ENCODE measurements at regions of chr10 and their contacts with region 1.

Region 1: GRCh38 chr10:58384999-58385783 is at the start of gene TFAM:
- DNase-seq: peak; percentile 88
- ATAC-seq: peak; percentile 97
- H3K4me3 ChIP-seq: peak within 1 kb of the TSS; percentile 78 to 96 (median 90)
- H3K27ac ChIP-seq: peak within 1 kb of the TSS; percentile 82
- H3K4me1 ChIP-seq: peaks cover 38% of the 10 kb centered on the region
- H3K27me3 ChIP-seq: no peaks in the 10 kb centered on the region; a peak in 1 of 5 replicates
- CTCF ChIP-seq: peak; percentile 91
- EP300 ChIP-seq: peak in 1 of 2 experiments; percentile 43; a peak in 1 of 4 replicates
- POLR2A ChIP-seq: peak; percentile 97
- RAD21 ChIP-seq: peak; percentile 91
- total RNA-seq, gene TFAM: 125 and 189 TPM in 2 replicates

Region 2: GRCh38 chr10:58177362-58177947 is 207.7 kb before region 1 on chr10:
- CTCF ChIA-PET with region 1: interaction called, 4 read pairs
- POLR2A ChIA-PET with region 1: no interaction called
- in situ Hi-C with region 1: loop called (anchors 10 kb)
- intact Hi-C with region 1: loop called (anchors 5 kb)
- DNase-seq: peak; percentile 15
- ATAC-seq: no peak
- H3K4me3 ChIP-seq: no peak overlapping the region
- H3K27ac ChIP-seq: no peak overlapping the region
- H3K4me1 ChIP-seq: no peaks in the 10 kb centered on the region
- H3K27me3 ChIP-seq: no peaks in the 10 kb centered on the region; a peak in 1 of 5 replicates
- CTCF ChIP-seq: peak; percentile 64
- EP300 ChIP-seq: no peak
- POLR2A ChIP-seq: no peak
- RAD21 ChIP-seq: peak; percentile 52

Region 3: DNA sequence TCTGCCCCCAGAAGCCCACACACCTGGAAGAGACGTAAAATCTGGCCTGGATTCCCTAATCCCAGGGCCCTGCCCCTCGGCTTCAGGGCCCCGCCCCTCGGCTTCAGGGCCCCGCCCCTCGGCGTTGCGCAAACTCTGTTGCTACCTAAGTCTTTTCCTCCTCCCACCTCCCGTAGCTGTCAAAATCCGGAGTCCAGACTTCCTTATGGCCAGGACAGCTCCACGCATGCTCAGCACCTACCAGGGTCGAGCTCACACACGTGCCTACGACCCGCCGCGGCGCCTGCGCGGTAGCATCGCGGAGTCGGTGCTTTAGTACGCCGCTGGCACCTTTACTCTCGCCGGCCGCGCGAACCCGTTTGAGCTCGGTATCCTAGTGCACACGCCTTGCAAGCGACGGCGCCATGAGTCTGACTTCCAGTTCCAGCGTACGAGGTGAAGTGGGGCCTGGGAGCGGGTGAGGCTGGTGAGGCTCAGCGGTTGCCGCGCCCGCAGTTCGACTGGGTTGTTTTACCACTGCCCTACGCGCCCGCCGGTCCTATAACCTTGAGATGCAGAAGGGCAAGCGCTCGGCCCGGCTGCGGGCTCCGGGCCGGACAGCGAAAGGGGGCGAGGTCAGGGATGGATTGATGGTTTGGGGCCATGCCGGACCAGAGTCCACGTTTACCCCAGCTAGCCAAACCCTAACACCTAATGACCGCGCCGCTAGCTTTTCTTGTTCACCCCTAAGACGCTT is 116.2 kb before region 1 on chr10 and contains the start of gene CISD1:
- CTCF ChIA-PET with region 1: no interaction called
- POLR2A ChIA-PET with region 1: interaction called, 3 read pairs
- in situ Hi-C with region 1: no loop called
- intact Hi-C with region 1: loop called (anchors 1 kb)
- DNase-seq: peak; percentile 99
- ATAC-seq: peak; percentile 80
- H3K4me3 ChIP-seq: peak within 1 kb of the TSS; percentile 74 to 88 (median 83)
- H3K27ac ChIP-seq: peak within 1 kb of the TSS; percentile 92
- H3K4me1 ChIP-seq: peaks cover 35% of the 10 kb centered on the region
- H3K27me3 ChIP-seq: no peaks in the 10 kb centered on the region; a peak in 1 of 5 replicates
- CTCF ChIP-seq: no peak; the same call in 1 of the 2 replicates
- EP300 ChIP-seq: 0 out of 4 replicates have a peak, but pooled peaks of 1 of the 2 experiments have one; percentile 15
- POLR2A ChIP-seq: peak; percentile 80 to 87
- RAD21 ChIP-seq: no peak
- total RNA-seq, gene CISD1: 78.9 and 92.2 TPM in 2 replicates

Region 4: DNA sequence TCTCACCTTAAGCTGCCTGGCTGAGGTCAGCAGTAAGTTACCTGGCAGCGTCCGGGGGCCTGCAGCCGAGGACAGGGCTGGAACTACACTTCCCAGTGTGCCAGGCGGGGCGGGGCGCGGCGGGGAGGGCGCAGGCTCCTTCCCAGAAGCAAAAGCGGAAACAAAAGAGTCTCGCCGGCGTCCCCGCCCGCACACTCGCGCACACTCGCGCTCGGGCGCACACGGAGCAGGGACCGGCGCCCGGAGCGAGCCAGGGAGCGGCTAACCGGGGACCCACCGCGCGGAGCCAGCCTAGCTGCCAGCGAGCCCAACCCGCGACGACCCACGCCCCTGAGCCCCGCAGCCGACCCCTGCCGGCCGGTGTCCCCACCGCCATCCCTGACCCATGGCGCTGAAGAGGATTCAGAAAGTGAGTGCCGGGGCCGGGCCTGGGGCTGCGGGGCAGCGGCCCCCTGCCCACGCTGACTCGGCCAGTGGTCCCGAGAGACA is 50.3 kb before region 1 on chr10 and contains the start of gene UBE2D1:
- CTCF ChIA-PET with region 1: no interaction called
- POLR2A ChIA-PET with region 1: interaction called, 12 read pairs
- in situ Hi-C with region 1: no loop called
- intact Hi-C with region 1: loop called (anchors 1 kb)
- DNase-seq: peak; percentile 63
- ATAC-seq: peak; percentile 97
- H3K4me3 ChIP-seq: peak within 1 kb of the TSS; percentile 81 to 99 (median 90)
- H3K27ac ChIP-seq: peak within 1 kb of the TSS; percentile 41
- H3K4me1 ChIP-seq: peaks cover 18% of the 10 kb centered on the region
- H3K27me3 ChIP-seq: peaks cover 0 to 3% of the 10 kb centered on the region in 2 experiments; a peak in 1 of 5 replicates
- CTCF ChIP-seq: peak; percentile 42; the same call in 1 of the 2 replicates
- EP300 ChIP-seq: no peak
- POLR2A ChIP-seq: peak; percentile 82 to 98
- RAD21 ChIP-seq: peak; percentile 55; the same call in 1 of the 2 replicates
- total RNA-seq, gene UBE2D1: 6.2 and 7.9 TPM in 2 replicates

Region 5: DNA sequence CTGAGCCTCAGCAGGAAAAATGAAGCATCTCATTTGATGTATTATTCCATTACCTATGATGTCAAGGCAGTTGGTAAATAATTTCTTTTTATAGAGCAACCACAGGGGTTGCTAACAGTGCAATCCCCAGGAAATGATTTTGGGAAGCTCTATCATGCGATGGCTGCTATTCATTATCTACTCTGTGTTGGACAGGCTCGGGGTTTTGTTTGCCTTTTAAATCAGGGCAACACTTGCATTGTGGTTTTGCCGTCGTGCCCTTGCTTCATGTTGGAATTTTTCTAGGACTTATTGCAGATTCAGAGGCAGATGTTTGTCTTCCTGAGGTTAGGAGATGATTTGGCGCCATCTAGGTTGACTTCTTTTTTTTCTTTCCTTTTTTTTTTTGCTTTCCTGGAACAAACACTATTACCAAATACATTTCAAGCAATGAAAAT is 255.9 kb after region 1 on chr10:
- CTCF ChIA-PET with region 1: no interaction called
- POLR2A ChIA-PET with region 1: no interaction called
- in situ Hi-C with region 1: no loop called
- intact Hi-C with region 1: loop called (anchors 1 kb)
- DNase-seq: peak; percentile 81
- ATAC-seq: peak; percentile 52; the same call in 2 of the 3 replicates
- H3K4me3 ChIP-seq: no peak overlapping the region
- H3K27ac ChIP-seq: no peak overlapping the region
- H3K4me1 ChIP-seq: peaks cover 33% of the 10 kb centered on the region
- H3K27me3 ChIP-seq: no peaks in the 10 kb centered on the region
- CTCF ChIP-seq: peak; percentile 58
- EP300 ChIP-seq: no peak
- POLR2A ChIP-seq: no peak
- RAD21 ChIP-seq: no peak

Region 6: DNA sequence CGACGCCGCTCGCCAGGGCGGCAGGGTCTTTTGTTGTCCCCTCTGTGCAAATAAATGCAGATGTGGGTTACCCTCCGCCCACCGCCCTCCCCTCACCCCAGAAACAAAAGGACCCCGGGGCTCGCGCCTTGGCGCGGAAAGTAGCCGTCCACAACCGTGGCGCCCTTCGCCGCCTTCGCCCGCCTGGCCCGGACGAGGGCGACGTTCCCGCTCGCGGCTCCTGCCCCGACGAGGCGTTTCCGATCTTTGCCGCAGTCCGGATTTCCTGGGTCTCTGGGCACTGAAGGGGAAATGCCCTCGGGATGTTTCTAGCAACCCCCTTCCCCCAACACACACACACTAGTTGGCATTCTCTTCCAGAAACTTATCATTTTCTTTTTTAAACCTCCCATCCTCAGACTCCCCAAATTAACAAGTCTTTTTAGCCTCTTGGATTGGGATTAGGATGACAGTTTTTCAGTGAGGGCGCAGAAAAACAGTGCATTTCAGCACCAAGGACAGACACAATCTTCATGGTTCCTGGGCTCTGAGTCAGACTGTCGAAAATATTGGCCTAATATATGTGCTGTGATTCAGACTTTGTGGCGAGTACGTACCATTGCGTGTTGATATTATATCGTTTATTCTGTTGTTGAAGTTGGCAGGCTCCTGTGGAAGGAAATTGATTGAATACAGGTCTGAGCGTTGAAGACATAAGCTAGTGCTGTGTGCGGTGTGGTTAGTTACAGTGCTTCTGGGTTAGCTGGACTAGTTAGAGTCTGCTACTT is 792.0 kb after region 1 on chr10:
- CTCF ChIA-PET with region 1: no interaction called
- POLR2A ChIA-PET with region 1: no interaction called
- in situ Hi-C with region 1: no loop called
- intact Hi-C with region 1: no loop called
- DNase-seq: peak; percentile 80
- ATAC-seq: peak; percentile 75
- H3K4me3 ChIP-seq: peak overlapping the region; percentile 82 to 99 (median 89)
- H3K27ac ChIP-seq: peak overlapping the region; percentile 95
- H3K4me1 ChIP-seq: peaks cover 24% of the 10 kb centered on the region
- H3K27me3 ChIP-seq: no peaks in the 10 kb centered on the region; a peak in 1 of 5 replicates
- CTCF ChIP-seq: peak; percentile 40
- EP300 ChIP-seq: no peak
- POLR2A ChIP-seq: peak in 1 of 2 experiments; percentile 60; a peak in 1 of 4 replicates
- RAD21 ChIP-seq: no peak